Motor neuron (in vitro differentiated cells): ENCODE measurements at regions of chr17 and their contacts with region 1.

Region 1: DNA sequence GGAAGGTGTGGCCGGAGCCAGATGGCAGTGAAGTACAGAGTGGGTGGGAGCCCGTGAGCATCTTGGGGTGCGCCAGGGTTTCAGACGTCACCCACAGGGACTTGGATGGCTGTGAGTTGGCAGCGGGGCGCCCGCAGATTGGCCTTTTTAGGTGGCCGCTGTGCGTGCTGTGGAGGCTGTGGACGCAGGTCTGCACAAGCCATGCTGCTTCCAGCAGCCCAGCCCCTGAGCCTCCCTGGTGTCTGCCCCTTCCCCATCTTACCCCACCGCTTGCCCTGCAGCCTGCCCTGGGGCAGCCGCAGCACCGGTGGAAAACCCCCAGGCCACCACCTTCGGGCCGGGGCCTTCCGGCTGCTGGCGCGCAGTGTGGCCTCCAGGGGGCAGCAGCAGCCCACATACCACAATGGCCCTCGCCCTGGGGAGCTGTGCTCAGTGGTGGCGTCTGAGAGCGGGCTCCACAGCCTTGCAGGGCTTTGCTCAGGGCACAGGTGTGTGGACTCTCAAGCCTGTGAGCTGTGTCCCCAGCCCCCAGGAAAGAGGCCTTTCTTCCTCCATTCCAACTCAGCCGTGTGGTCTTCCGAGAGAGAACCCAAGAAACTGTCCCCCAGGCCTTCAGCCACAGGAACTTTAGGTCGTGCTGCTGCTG is 11.8 kb downstream of the ENDOV start:
- ATAC-seq: peak; percentile 89 to 96 (median 92)
- H3K4me3 ChIP-seq: no peak overlapping the region
- H3K27ac ChIP-seq: no peak overlapping the region
- H3K4me1 ChIP-seq: peaks cover 0 to 3% of the 10 kb centered on the region in 2 donors

Region 2: DNA sequence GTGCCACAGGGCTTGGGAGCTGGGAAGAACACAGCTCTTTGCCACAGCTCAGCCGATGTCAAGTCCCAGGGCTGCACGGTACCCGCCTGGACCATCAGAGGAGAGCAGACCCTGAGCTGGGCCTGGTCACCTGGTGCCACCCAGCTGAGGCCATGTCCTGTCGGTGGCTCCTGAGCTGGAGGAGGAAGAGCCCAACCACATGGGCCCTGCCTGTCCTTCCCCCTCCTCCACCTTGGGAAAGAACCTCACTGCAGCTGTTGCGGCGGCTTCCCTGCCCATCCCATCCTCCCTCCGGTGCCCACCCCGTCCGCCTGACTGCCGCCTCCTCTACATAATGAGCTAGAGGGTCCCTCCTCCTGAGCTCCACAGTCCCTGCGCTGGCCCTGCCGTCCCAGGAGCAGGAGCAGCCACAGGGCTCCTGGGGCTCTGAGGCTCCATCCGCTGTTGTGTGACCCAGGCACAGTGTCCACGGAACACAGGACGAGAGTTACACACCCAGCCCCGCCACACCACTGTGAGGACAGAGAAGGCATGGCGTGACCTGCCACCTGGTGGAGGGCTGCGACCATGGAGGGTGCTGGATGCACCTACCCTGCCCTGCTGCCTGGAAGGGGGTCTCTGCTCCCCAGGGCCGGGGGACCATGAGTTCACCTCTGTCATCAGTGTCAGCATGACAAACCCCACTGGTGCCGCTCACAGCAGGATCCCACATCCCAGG is 543.4 kb after region 1 on chr17:
- in situ Hi-C with region 1: loop called in 4 of 9 experiments (anchors 10 to 25 kb)
- ATAC-seq: peak; percentile 34 to 79 (median 70)
- H3K4me3 ChIP-seq: no peak overlapping the region
- H3K27ac ChIP-seq: peak overlapping the region; percentile 7 to 64
- H3K4me1 ChIP-seq: peaks cover 28% of the 10 kb centered on the region in 2 donors

Region 3: DNA sequence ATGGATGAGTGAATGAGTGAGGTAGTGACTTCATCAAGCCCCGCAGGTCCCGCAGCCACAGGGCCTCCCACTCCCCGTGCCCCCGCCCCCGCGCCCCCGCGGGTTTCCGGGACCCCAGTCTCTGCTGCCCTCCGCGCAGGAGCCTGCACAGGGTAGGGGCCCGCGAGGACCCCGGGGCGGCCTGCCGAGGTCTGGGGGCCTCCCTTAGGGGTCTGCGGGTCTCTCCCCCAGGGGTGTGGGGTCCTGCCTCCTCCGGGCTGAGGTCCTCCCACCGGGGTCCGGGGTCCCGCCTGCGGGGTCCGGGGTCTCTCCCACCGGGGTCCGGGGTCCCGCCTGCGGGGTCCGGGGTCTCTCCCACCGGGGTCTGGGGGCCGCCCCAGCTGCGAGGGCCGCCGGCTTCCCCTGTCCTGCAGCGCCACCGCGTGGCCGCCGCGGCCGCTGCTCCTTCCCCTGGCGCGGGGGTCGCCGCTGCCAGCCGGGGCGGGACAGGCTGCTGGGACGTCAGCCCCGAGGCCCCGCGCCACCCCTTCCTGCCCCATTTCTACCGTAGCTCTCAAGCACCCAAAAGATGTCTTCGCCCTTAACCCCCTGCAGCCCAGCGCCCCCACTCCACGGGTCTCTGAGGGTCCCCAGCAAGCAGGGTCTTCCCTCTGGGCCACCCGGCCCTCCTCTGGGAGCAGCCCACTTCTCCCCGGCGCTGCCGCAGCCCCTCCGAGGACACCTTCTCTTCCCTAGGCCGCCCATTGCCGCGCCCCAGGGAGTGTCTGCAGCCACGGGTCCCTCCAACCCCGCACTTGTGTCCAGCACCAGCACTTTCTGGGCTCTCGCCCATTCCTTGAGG is 554.5 kb after region 1 on chr17:
- in situ Hi-C with region 1: loop called (anchors 10 to 25 kb)
- ATAC-seq: peak; percentile 36 to 87 (median 70)
- H3K4me3 ChIP-seq: peak overlapping the region; percentile 27 to 44 (median 31)
- H3K27ac ChIP-seq: no peak overlapping the region
- H3K4me1 ChIP-seq: peaks cover 0 to 4% of the 10 kb centered on the region in 2 donors

Region 4: GRCh38 chr17:80991645-80992076 is 564.9 kb after region 1 on chr17 and contains the start of gene CHMP6:
- in situ Hi-C with region 1: loop called in 7 of 9 experiments (anchors 10 to 25 kb)
- ATAC-seq: peak; percentile 62 to 71 (median 66)
- H3K4me3 ChIP-seq: peak within 1 kb of the TSS; percentile 84 to 97 (median 95)
- H3K27ac ChIP-seq: peak within 1 kb of the TSS in 1 of 2 donors; percentile 41
- H3K4me1 ChIP-seq: peaks cover 18 to 26% of the 10 kb centered on the region in 2 donors
- total RNA-seq, gene CHMP6: 13.1 to 27.2 (median 21.7) TPM